ENCODE measurements at regions of chr3 and their contacts with region 1.

Region 1: GRCh38 chr3:52238761-52239701 is at the start of gene TWF2:
- DNase-seq: peak in 1 of 2 donors; percentile 90
- H3K4me3 ChIP-seq: peak within 1 kb of the TSS; percentile 90 to 99
- H3K27ac ChIP-seq: peak within 1 kb of the TSS; percentile 88 to 89
- H3K4me1 ChIP-seq: peaks cover 9 to 32% of the 10 kb centered on the region in 2 donors
- H3K27me3 ChIP-seq: no peaks in the 10 kb centered on the region
- CTCF ChIP-seq: peak in 2 of 3 experiments; percentile 47 to 55
- total RNA-seq, gene TWF2: 162 TPM

Region 2: DNA sequence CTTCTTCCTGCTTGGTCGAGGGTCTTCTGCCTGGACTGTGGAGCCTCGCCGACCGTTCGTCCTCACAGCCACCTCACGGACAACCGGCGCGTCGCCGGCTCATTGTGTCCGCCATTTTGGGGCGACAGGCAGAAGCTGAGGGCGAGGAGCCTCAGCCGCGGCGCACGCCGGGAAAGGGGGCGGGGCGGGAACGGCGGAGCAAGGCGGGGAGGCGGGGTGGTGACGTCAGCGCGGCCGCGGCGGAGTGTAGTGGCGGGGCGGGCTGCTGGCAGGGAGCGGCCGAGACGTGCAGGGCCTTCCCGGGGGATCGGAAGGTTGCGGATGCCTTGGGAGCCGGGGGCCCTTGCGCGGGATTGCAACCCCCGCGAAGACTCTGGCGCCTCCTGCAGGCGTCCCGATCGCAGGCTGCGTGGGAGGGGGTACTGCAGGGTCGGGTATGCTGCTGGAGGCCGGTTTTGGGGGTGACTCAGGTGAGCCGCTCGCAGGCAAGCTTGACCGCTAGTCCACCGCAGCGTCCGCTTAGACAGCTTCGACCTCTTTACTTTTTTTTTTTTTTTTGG is 39.6 kb after region 1 on chr3 and contains the start of gene WDR82:
- intact Hi-C with region 1: loop called (anchors 2 kb)
- DNase-seq: peak; percentile 82 to 97
- H3K4me3 ChIP-seq: peak within 1 kb of the TSS; percentile 81 to 91
- H3K27ac ChIP-seq: peak within 1 kb of the TSS; percentile 94 to 97
- H3K4me1 ChIP-seq: peaks cover 11 to 43% of the 10 kb centered on the region in 2 donors
- H3K27me3 ChIP-seq: no peaks in the 10 kb centered on the region
- CTCF ChIP-seq: peak; percentile 48 to 54 (median 49)
- total RNA-seq, gene WDR82: 42.0 TPM

Region 3: GRCh38 chr3:52286777-52287110 is 47.7 kb after region 1 on chr3:
- intact Hi-C with region 1: loop called (anchors 2 kb)
- DNase-seq: no peak
- H3K4me3 ChIP-seq: peak overlapping the region; percentile 68 to 74
- H3K27ac ChIP-seq: peak overlapping the region; percentile 94 to 98
- H3K4me1 ChIP-seq: peaks cover 0 to 21% of the 10 kb centered on the region in 2 donors
- H3K27me3 ChIP-seq: no peaks in the 10 kb centered on the region
- CTCF ChIP-seq: no peak

Region 4: GRCh38 chr3:52333869-52334557 is 95.0 kb after region 1 on chr3:
- intact Hi-C with region 1: no loop called
- DNase-seq: no peak
- H3K4me3 ChIP-seq: no peak overlapping the region
- H3K27ac ChIP-seq: no peak overlapping the region
- H3K4me1 ChIP-seq: no peaks in the 10 kb centered on the region
- H3K27me3 ChIP-seq: no peaks in the 10 kb centered on the region
- CTCF ChIP-seq: no peak

Region 5: DNA sequence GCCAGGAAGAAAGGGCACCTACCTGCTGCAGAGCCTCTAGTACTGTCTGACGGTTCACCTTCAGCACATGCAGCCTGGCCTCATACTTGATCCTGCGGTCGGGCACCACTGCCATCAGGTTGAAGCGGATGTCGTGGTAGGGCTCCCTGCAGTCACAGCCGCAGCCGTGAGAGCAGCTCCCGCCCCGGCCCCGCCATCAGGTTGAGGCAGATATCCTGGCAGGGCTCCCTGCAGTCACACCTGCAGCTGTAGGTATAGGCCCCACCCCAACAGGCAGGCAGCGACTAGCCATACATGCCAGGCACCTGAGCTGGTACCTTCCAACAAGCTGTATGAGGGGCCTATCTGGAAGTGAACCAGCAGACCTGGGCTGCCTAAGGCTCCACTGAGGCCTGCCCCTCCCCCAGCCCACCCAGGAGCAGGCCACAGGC is 167.2 kb after region 1 on chr3:
- intact Hi-C with region 1: loop called (anchors 10 kb)
- DNase-seq: no peak
- H3K4me3 ChIP-seq: no peak overlapping the region
- H3K27ac ChIP-seq: no peak overlapping the region
- H3K4me1 ChIP-seq: peaks cover 8 to 12% of the 10 kb centered on the region in 2 donors
- H3K27me3 ChIP-seq: no peaks in the 10 kb centered on the region
- CTCF ChIP-seq: no peak